ENCODE measurements at regions of chr18 and their contacts with region 1.

Region 1: GRCh38 chr18:31722369-31722957 is 38.1 kb upstream of the B4GALT6 start:
- DNase-seq: peak; percentile 88
- H3K4me3 Mint-ChIP-seq: no peak overlapping the region
- H3K27ac Mint-ChIP-seq: no peak overlapping the region
- H3K4me1 Mint-ChIP-seq: peaks cover 8% of the 10 kb centered on the region
- H3K27me3 Mint-ChIP-seq: peaks cover 21% of the 10 kb centered on the region
- CTCF ChIP-seq: peak; percentile 85

Region 2: DNA sequence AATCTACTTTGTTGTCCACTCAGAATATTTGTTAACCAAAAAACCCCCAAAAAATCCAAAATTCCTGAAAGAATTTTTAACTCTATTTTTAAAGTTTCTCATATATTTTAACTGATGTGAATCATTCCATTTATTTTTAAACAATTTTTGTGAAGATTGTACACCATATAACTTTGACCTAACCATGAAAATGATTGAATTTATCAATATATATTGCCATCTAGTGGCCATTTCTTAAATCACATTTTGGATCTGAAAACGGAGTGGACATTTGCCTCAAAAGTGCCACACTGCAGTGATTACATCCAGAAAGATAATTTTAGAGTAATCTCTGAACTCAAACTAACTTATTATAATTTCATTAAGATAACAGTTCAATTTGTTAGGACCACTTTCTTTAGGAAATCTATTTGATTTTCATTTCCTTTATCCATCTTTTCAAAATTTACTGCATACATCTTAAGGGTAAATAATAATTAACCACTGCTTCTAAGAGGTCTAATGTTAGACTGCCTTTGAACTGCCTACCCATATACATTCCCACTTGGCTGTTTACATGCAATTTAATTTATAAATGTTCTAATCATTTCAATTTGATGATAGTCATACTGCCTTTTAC is 751.0 kb before region 1 on chr18:
- CTCF ChIA-PET with region 1: no interaction called
- intact Hi-C with region 1: loop called (anchors 5 kb)
- DNase-seq: no peak
- H3K4me3 Mint-ChIP-seq: no peak overlapping the region
- H3K27ac Mint-ChIP-seq: no peak overlapping the region
- H3K4me1 Mint-ChIP-seq: no peaks in the 10 kb centered on the region
- H3K27me3 Mint-ChIP-seq: no peaks in the 10 kb centered on the region
- CTCF ChIP-seq: peak; percentile 29

Region 3: GRCh38 chr18:31555971-31556747 is 166.3 kb before region 1 on chr18:
- CTCF ChIA-PET with region 1: interaction called, 6 read pairs
- intact Hi-C with region 1: loop called (anchors 2 kb)
- DNase-seq: peak; percentile 55
- H3K4me3 Mint-ChIP-seq: no peak overlapping the region
- H3K27ac Mint-ChIP-seq: no peak overlapping the region
- H3K4me1 Mint-ChIP-seq: peaks cover 28% of the 10 kb centered on the region
- H3K27me3 Mint-ChIP-seq: no peaks in the 10 kb centered on the region
- CTCF ChIP-seq: peak; percentile 63

Region 4: GRCh38 chr18:31680831-31681568 is 41.5 kb before region 1 on chr18:
- CTCF ChIA-PET with region 1: no interaction called
- intact Hi-C with region 1: loop called (anchors 1 kb)
- DNase-seq: no peak
- H3K4me3 Mint-ChIP-seq: no peak overlapping the region
- H3K27ac Mint-ChIP-seq: no peak overlapping the region
- H3K4me1 Mint-ChIP-seq: peaks cover 49% of the 10 kb centered on the region
- H3K27me3 Mint-ChIP-seq: no peaks in the 10 kb centered on the region
- CTCF ChIP-seq: no peak

Region 5: GRCh38 chr18:31920277-31920676 is 197.8 kb after region 1 on chr18:
- CTCF ChIA-PET with region 1: no interaction called
- intact Hi-C with region 1: no loop called
- DNase-seq: no peak
- H3K4me3 Mint-ChIP-seq: no peak overlapping the region
- H3K27ac Mint-ChIP-seq: no peak overlapping the region
- H3K4me1 Mint-ChIP-seq: no peaks in the 10 kb centered on the region
- H3K27me3 Mint-ChIP-seq: no peaks in the 10 kb centered on the region
- CTCF ChIP-seq: no peak

Measured in Calu3 (cell line).